ENCODE measurements at regions of chr3 and their contacts with region 1.

Region 1: DNA sequence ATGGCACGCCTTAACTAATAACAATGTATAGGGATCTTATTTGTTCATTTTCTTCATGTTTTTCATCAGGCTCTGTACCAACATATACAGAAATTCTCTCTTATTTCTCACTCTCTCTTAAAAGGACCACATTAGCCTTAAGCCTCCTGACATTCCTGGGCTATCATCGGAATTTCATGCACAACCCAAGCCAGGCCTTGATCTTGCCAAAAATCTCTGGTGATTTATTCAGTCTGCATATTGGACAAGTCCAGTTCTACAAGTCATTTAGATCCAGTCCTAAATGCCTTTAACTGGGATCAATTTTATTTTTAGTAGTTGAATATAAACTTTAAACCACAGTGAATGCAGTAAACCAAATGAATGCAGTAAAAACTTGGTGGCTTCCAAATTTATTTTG is 385.4 kb downstream of the MECOM start:
- DNase-seq: no peak
- H3K4me3 ChIP-seq: no peak overlapping the region
- H3K27ac ChIP-seq: no peak overlapping the region
- H3K4me1 ChIP-seq: 0 out of 2 replicates have a peak, but pooled peaks cover 8% of the 10 kb centered on the region
- H3K27me3 ChIP-seq: no peaks in the 10 kb centered on the region
- CTCF ChIP-seq: no peak

Region 2: DNA sequence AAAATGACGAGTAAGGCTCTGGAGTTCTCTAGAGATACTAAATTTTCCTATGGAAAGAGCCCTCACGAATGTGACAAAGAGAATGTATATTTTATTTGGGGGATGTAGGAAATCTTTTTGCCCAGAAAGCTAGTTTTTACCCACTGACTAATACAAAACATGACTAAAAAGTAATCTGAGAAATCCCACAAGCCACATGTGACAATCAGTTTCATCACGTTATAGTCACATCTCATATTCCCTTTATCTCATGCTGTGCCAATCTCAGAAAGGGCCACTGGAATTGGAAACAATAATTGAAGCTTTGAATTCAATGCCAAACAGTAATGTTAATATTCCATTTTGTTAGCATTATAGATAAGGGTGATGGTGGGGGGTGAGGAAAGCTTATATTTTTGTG is 673.3 kb before region 1 on chr3:
- CTCF ChIA-PET with region 1: no interaction called
- POLR2A ChIA-PET with region 1: no interaction called
- intact Hi-C with region 1: no loop called
- DNase-seq: no peak
- H3K4me3 ChIP-seq: no peak overlapping the region
- H3K27ac ChIP-seq: no peak overlapping the region
- H3K4me1 ChIP-seq: no peaks in the 10 kb centered on the region
- H3K27me3 ChIP-seq: no peaks in the 10 kb centered on the region
- CTCF ChIP-seq: no peak

Region 3: GRCh38 chr3:169478566-169479313 is 200.6 kb after region 1 on chr3:
- CTCF ChIA-PET with region 1: no interaction called
- POLR2A ChIA-PET with region 1: no interaction called
- intact Hi-C with region 1: no loop called
- DNase-seq: peak in 1 of 2 experiments; percentile 70
- H3K4me3 ChIP-seq: no peak overlapping the region
- H3K27ac ChIP-seq: no peak overlapping the region
- H3K4me1 ChIP-seq: no peaks in the 10 kb centered on the region
- H3K27me3 ChIP-seq: no peaks in the 10 kb centered on the region
- CTCF ChIP-seq: no peak

Region 4: GRCh38 chr3:169581633-169582032 is 303.5 kb after region 1 on chr3:
- CTCF ChIA-PET with region 1: no interaction called
- POLR2A ChIA-PET with region 1: no interaction called
- intact Hi-C with region 1: no loop called
- DNase-seq: no peak
- H3K4me3 ChIP-seq: no peak overlapping the region
- H3K27ac ChIP-seq: no peak overlapping the region
- H3K4me1 ChIP-seq: peaks cover 5% of the 10 kb centered on the region; the same call in 1 of the 2 replicates
- H3K27me3 ChIP-seq: no peaks in the 10 kb centered on the region
- CTCF ChIP-seq: no peak

Region 5: DNA sequence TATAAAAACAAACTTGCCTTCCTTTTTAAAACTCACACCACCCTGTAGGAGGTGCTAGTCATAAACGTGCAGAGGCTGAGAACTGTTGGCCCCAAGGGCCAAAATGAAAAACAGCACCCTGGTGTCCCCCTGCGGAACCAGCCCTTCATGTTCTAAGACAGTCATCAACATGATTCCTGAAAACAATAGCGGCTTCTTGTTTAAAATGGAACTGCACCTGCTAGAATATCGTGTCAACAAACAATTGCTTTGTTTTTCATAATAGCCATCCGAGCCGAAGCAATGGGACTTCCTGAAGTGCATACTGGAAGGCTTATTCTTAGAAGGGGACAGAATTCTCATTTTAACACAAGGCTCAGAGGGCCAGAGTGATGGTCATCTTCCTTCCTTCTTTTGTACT is 341.7 kb after region 1 on chr3:
- CTCF ChIA-PET with region 1: no interaction called
- POLR2A ChIA-PET with region 1: no interaction called
- intact Hi-C with region 1: no loop called
- DNase-seq: no peak
- H3K4me3 ChIP-seq: no peak overlapping the region
- H3K27ac ChIP-seq: no peak overlapping the region
- H3K4me1 ChIP-seq: no peaks in the 10 kb centered on the region
- H3K27me3 ChIP-seq: no peaks in the 10 kb centered on the region
- CTCF ChIP-seq: no peak

Region 6: DNA sequence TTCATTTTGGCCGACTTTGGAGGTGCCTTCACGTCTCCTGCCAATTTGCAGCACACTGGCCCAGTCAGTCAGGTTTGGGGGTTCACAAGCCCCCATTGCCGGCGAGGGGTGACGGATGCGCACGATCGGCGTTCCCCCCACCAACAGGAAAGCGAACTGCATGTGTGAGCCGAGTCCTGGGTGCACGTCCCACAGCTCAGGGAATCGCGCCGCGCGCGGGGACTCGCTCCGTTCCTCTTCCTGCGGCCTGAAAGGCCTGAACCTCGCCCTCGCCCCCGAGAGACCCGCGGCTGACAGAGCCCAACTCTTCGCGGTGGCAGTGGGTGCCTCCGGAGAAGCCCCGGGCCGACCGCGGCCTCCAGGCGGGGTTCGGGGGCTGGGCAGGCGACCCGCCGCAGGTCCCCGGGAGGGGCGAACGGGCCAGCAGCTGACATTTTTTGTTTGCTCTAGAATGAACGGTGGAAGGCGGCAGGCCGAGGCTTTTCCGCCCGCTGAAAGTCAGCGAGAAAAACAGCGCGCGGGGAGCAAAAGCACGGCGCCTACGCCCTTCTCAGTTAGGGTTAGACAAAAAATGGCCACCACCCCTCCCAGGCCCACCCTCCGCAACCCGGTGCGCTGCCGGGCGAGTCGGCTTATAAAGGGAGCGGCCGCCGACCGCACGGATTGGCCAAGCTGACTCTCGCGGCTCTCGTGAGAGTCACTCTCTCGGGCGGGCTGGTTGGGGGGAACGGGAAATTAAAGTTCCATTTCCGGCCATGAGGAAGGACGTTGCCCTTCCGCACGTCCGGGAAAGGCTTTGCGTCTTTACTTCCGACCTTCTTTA is 486.6 kb after region 1 on chr3 and contains the start of gene TERC:
- CTCF ChIA-PET with region 1: no interaction called
- POLR2A ChIA-PET with region 1: interaction called, 11 read pairs
- intact Hi-C with region 1: no loop called
- DNase-seq: peak; percentile 93 to 96
- H3K4me3 ChIP-seq: peak within 1 kb of the TSS; percentile 99
- H3K27ac ChIP-seq: peak within 1 kb of the TSS; percentile 75
- H3K4me1 ChIP-seq: peaks cover 5% of the 10 kb centered on the region; the same call in 1 of the 2 replicates
- H3K27me3 ChIP-seq: no peaks in the 10 kb centered on the region
- CTCF ChIP-seq: no peak
- total RNA-seq, gene TERC: 7.6 and 22.7 TPM in 2 replicates

Measured in PC-9 (cell line).